CD8-positive, alpha-beta T cell (primary cell): ENCODE measurements at regions of chrX and their contacts with region 1.

Region 1: GRCh38 chrX:130079824-130080406 is 30.4 kb downstream of the ELF4 start:
- DNase-seq: peak in 8 of 9 experiments; percentile 18 to 78 (median 64)
- ATAC-seq: no peak
- H3K4me3 ChIP-seq: no peak overlapping the region
- H3K4me3 Mint-ChIP-seq: peak overlapping the region; percentile 19
- H3K27ac ChIP-seq: peak overlapping the region in 1 of 2 experiments; percentile 82
- H3K27ac Mint-ChIP-seq: peak overlapping the region; percentile 62
- H3K4me1 ChIP-seq: peaks cover 42% of the 10 kb centered on the region
- H3K4me1 Mint-ChIP-seq: peaks cover 43% of the 10 kb centered on the region
- H3K27me3 ChIP-seq: no peaks in the 10 kb centered on the region
- H3K27me3 Mint-ChIP-seq: no peaks in the 10 kb centered on the region
- CTCF ChIP-seq: peak; percentile 63

Region 2: GRCh38 chrX:129310000-129310399 is 769.9 kb before region 1 on chrX:
- CTCF ChIA-PET with region 1: no interaction called
- POLR2A ChIA-PET with region 1: no interaction called
- intact Hi-C with region 1: no loop called
- DNase-seq: no peak
- ATAC-seq: no peak
- H3K4me3 ChIP-seq: no peak overlapping the region
- H3K4me3 Mint-ChIP-seq: no peak overlapping the region
- H3K27ac ChIP-seq: no peak overlapping the region
- H3K27ac Mint-ChIP-seq: no peak overlapping the region
- H3K4me1 ChIP-seq: no peaks in the 10 kb centered on the region
- H3K4me1 Mint-ChIP-seq: no peaks in the 10 kb centered on the region
- H3K27me3 ChIP-seq: no peaks in the 10 kb centered on the region
- H3K27me3 Mint-ChIP-seq: no peaks in the 10 kb centered on the region
- CTCF ChIP-seq: no peak

Region 3: GRCh38 chrX:130091958-130092522 is 12.1 kb after region 1 on chrX:
- CTCF ChIA-PET with region 1: interaction called, 10 read pairs
- POLR2A ChIA-PET with region 1: interaction called, 4 read pairs
- intact Hi-C with region 1: loop called (anchors 1 kb)
- DNase-seq: peak; percentile 69 to 95 (median 83)
- ATAC-seq: peak; percentile 97
- H3K4me3 ChIP-seq: peak overlapping the region; percentile 50 to 58
- H3K4me3 Mint-ChIP-seq: peak overlapping the region; percentile 81
- H3K27ac ChIP-seq: peak overlapping the region; percentile 54 to 70
- H3K27ac Mint-ChIP-seq: peak overlapping the region; percentile 93
- H3K4me1 ChIP-seq: peaks cover 67% of the 10 kb centered on the region
- H3K4me1 Mint-ChIP-seq: peaks cover 58% of the 10 kb centered on the region
- H3K27me3 ChIP-seq: no peaks in the 10 kb centered on the region
- H3K27me3 Mint-ChIP-seq: no peaks in the 10 kb centered on the region
- CTCF ChIP-seq: no peak

Region 4: GRCh38 chrX:130110379-130111219 is 30.7 kb after region 1 on chrX and contains the start of gene ELF4:
- CTCF ChIA-PET with region 1: interaction called, 129 read pairs
- POLR2A ChIA-PET with region 1: interaction called, 3 read pairs
- intact Hi-C with region 1: loop called (anchors 1 to 2 kb)
- DNase-seq: peak in 8 of 9 experiments; percentile 38 to 83 (median 65)
- ATAC-seq: peak; percentile 75
- H3K4me3 ChIP-seq: peak within 1 kb of the TSS; percentile 54 to 58
- H3K4me3 Mint-ChIP-seq: peak within 1 kb of the TSS; percentile 87
- H3K27ac ChIP-seq: peak within 1 kb of the TSS; percentile 35 to 73
- H3K27ac Mint-ChIP-seq: peak within 1 kb of the TSS; percentile 94
- H3K4me1 ChIP-seq: peaks cover 10% of the 10 kb centered on the region
- H3K4me1 Mint-ChIP-seq: peaks cover 30% of the 10 kb centered on the region
- H3K27me3 ChIP-seq: no peaks in the 10 kb centered on the region
- H3K27me3 Mint-ChIP-seq: no peaks in the 10 kb centered on the region
- CTCF ChIP-seq: no peak
- total RNA-seq, gene ELF4: 11.7 to 13.8 TPM

Region 5: DNA sequence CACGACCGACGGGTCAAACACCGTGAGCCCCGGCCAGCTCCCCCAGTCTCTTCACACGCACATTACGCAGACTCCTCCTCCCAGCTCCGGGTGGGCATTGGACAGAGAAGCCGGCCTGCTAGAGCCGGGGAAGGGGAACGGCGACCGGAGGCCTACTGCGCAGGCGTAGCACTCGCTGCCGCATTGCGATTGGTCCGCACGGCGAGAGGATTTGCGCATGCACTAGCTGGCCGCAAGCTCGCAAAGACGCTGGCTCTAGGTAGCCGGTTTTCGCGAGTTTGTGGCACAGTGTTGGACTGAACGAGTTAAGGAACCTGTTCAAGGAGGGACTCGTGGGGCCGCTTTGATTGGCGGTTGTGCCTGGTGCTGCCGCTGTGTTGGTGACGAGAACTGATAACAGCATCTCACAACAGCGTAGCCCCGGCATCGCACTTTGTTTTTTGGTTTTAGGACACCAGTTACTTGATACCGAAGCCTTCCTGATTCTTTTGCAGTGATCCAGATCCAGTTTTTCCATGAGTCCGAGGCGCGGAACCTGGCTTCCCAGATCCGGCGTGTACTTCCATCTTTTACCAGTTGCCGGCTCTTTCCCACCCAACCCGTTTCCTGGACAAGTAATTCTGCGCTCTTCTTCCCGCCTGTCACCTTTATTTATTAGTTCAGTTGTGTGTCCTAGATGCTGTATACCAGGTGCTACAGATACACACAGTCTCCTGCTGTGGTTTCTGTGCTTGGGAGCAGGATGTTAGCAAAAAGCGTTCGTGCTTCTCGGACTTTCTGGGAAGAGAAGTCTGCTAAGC is 86.0 kb after region 1 on chrX and contains the start of gene AIFM1:
- CTCF ChIA-PET with region 1: interaction called, 7 read pairs
- POLR2A ChIA-PET with region 1: no interaction called
- intact Hi-C with region 1: loop called (anchors 5 kb)
- DNase-seq: peak; percentile 68 to 95 (median 85)
- ATAC-seq: peak; percentile 87
- H3K4me3 ChIP-seq: peak within 1 kb of the TSS; percentile 57 to 74
- H3K4me3 Mint-ChIP-seq: peak within 1 kb of the TSS; percentile 90
- H3K27ac ChIP-seq: peak within 1 kb of the TSS; percentile 54 to 80
- H3K27ac Mint-ChIP-seq: peak within 1 kb of the TSS; percentile 90
- H3K4me1 ChIP-seq: peaks cover 17% of the 10 kb centered on the region
- H3K4me1 Mint-ChIP-seq: peaks cover 42% of the 10 kb centered on the region
- H3K27me3 ChIP-seq: no peaks in the 10 kb centered on the region
- H3K27me3 Mint-ChIP-seq: no peaks in the 10 kb centered on the region
- CTCF ChIP-seq: no peak
- total RNA-seq, gene AIFM1: 4.4 to 4.9 TPM

Region 6: GRCh38 chrX:130196466-130196865 is 116.6 kb after region 1 on chrX:
- CTCF ChIA-PET with region 1: interaction called, 88 read pairs
- POLR2A ChIA-PET with region 1: interaction called, 3 read pairs
- intact Hi-C with region 1: loop called (anchors 1 kb)
- DNase-seq: no peak
- ATAC-seq: no peak
- H3K4me3 ChIP-seq: no peak overlapping the region
- H3K4me3 Mint-ChIP-seq: no peak overlapping the region
- H3K27ac ChIP-seq: no peak overlapping the region
- H3K27ac Mint-ChIP-seq: no peak overlapping the region
- H3K4me1 ChIP-seq: no peaks in the 10 kb centered on the region
- H3K4me1 Mint-ChIP-seq: peaks cover 2% of the 10 kb centered on the region
- H3K27me3 ChIP-seq: no peaks in the 10 kb centered on the region
- H3K27me3 Mint-ChIP-seq: no peaks in the 10 kb centered on the region
- CTCF ChIP-seq: no peak

Region 7: GRCh38 chrX:130401415-130402207 is 321.7 kb after region 1 on chrX and contains the start of gene RBMX2:
- CTCF ChIA-PET with region 1: no interaction called
- POLR2A ChIA-PET with region 1: no interaction called
- intact Hi-C with region 1: no loop called
- DNase-seq: peak; percentile 37 to 88 (median 68)
- ATAC-seq: peak; percentile 85
- H3K4me3 ChIP-seq: peak within 1 kb of the TSS; percentile 63 to 99
- H3K4me3 Mint-ChIP-seq: peak within 1 kb of the TSS; percentile 87
- H3K27ac ChIP-seq: peak within 1 kb of the TSS; percentile 73 to 76
- H3K27ac Mint-ChIP-seq: peak within 1 kb of the TSS; percentile 91
- H3K4me1 ChIP-seq: peaks cover 12% of the 10 kb centered on the region
- H3K4me1 Mint-ChIP-seq: peaks cover 27% of the 10 kb centered on the region
- H3K27me3 ChIP-seq: no peaks in the 10 kb centered on the region
- H3K27me3 Mint-ChIP-seq: no peaks in the 10 kb centered on the region
- CTCF ChIP-seq: no peak
- total RNA-seq, gene RBMX2: 19.4 to 20.7 TPM

Region 8: DNA sequence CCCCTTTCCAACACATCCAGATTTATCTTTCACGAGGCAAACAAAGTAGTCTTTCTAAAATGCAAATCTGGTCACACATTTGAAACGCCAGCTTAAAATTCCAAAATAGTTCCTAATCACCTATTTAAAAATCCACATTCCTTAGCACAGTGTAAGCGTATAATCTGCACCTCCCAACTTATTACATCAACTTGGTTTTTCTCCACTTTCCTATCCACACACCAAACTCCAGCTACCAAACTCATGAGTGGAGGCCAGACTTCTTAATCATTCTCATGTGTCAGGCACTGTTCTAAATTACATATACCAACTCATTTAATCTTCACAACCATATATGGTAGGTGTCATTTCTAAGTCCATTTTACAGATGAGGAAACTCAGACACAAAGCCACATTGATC is 789.3 kb after region 1 on chrX:
- CTCF ChIA-PET with region 1: no interaction called
- POLR2A ChIA-PET with region 1: no interaction called
- intact Hi-C with region 1: no loop called
- DNase-seq: no peak
- ATAC-seq: no peak
- H3K4me3 ChIP-seq: no peak overlapping the region
- H3K4me3 Mint-ChIP-seq: no peak overlapping the region
- H3K27ac ChIP-seq: no peak overlapping the region
- H3K27ac Mint-ChIP-seq: no peak overlapping the region
- H3K4me1 ChIP-seq: no peaks in the 10 kb centered on the region
- H3K4me1 Mint-ChIP-seq: peaks cover 4% of the 10 kb centered on the region
- H3K27me3 ChIP-seq: no peaks in the 10 kb centered on the region
- H3K27me3 Mint-ChIP-seq: no peaks in the 10 kb centered on the region
- CTCF ChIP-seq: no peak

Region 9: DNA sequence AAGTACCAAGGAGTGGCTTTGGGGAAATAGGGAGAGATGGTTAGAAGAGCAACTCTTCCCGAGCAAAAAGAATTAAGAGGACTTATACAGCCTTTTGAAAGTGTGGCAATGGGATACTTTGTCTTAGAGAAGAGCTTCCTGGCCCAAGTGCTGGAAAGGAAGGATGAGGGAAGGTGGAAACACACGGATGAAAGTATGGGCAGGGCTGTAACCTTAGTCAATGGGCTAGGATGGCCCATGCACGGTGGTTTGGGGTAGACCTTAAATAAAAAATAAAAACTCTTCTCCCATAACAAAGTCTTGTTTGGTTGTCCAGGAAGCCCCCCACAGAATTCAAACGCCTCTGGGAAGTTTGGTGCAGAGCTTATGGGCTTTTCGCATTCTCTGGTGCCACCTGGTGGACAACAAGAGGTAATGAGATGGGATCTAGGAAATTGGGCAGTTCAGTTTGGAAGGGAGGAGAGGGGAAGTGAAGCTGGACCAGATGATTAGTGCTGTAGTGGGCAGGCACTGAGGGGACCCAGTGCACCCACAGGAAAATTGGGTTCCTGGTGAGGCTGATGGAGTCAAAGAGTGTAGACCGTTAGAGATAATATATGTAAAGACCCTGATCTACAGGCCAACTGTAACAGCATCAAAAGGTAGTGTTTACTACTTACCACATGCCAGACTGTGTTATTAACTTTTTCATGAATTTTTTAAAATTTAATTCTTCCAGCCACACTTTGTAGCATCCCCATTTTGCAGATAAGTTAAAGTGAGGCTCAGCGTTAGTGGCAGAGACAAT is 836.9 kb after region 1 on chrX:
- CTCF ChIA-PET with region 1: no interaction called
- POLR2A ChIA-PET with region 1: no interaction called
- intact Hi-C with region 1: loop called in 1 of 2 experiments (anchors 5 kb)
- DNase-seq: peak in 8 of 9 experiments; percentile 0 to 74 (median 34)
- ATAC-seq: peak; percentile 58
- H3K4me3 ChIP-seq: no peak overlapping the region
- H3K4me3 Mint-ChIP-seq: no peak overlapping the region
- H3K27ac ChIP-seq: no peak overlapping the region
- H3K27ac Mint-ChIP-seq: no peak overlapping the region
- H3K4me1 ChIP-seq: no peaks in the 10 kb centered on the region
- H3K4me1 Mint-ChIP-seq: no peaks in the 10 kb centered on the region
- H3K27me3 ChIP-seq: no peaks in the 10 kb centered on the region
- H3K27me3 Mint-ChIP-seq: no peaks in the 10 kb centered on the region
- CTCF ChIP-seq: peak; percentile 55